Activated naive CD4-positive, alpha-beta T cell treated with anti-CD3 and anti-CD28 coated beads for 36 hours (primary cell): ENCODE measurements at regions of chr9 and their contacts with region 1.

Region 1: GRCh38 chr9:19281801-19282200 is 51.3 kb downstream of the DENND4C start:
- DNase-seq: no peak
- H3K4me3 Mint-ChIP-seq: no peak overlapping the region
- H3K27ac Mint-ChIP-seq: no peak overlapping the region
- H3K4me1 Mint-ChIP-seq: peaks cover 17% of the 10 kb centered on the region
- H3K27me3 Mint-ChIP-seq: no peaks in the 10 kb centered on the region

Region 2: DNA sequence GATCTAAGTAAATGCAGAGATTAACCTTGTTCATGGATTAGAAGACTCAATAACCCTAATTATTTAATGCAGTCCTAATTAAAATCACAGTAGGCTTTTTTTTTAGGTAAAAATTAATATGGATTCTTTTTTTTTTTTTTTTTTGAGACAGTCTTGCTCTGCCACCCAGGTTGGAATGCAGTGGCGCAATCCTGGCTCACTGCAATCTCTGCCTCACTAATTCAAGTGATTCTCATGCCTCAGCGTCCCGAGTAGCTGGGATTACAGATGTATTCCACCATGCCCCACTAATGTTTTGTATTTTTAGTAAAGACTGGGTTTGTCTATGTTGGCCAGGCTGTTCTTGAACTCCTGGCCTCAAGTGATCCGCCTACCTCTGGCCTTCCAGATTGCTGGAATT is 10.7 kb before region 1 on chr9:
- CTCF ChIA-PET with region 1: no interaction called
- intact Hi-C with region 1: loop called (anchors 2 kb)
- DNase-seq: no peak
- H3K4me3 Mint-ChIP-seq: no peak overlapping the region
- H3K27ac Mint-ChIP-seq: no peak overlapping the region
- H3K4me1 Mint-ChIP-seq: peaks cover 30% of the 10 kb centered on the region
- H3K27me3 Mint-ChIP-seq: no peaks in the 10 kb centered on the region

Region 3: GRCh38 chr9:19358701-19359100 is 76.9 kb after region 1 on chr9:
- CTCF ChIA-PET with region 1: no interaction called
- intact Hi-C with region 1: no loop called
- DNase-seq: no peak
- H3K4me3 Mint-ChIP-seq: no peak overlapping the region
- H3K27ac Mint-ChIP-seq: no peak overlapping the region
- H3K4me1 Mint-ChIP-seq: no peaks in the 10 kb centered on the region
- H3K27me3 Mint-ChIP-seq: no peaks in the 10 kb centered on the region